ENCODE measurements at regions of chr4 and their contacts with region 1.

Region 1: GRCh38 chr4:3330707-3331106 is 37.9 kb downstream of the RGS12 start:
- DNase-seq: no peak
- H3K4me3 ChIP-seq: no peak overlapping the region
- H3K27ac ChIP-seq: no peak overlapping the region
- H3K4me1 ChIP-seq: no peaks in the 10 kb centered on the region
- CTCF ChIP-seq: no peak

Region 2: DNA sequence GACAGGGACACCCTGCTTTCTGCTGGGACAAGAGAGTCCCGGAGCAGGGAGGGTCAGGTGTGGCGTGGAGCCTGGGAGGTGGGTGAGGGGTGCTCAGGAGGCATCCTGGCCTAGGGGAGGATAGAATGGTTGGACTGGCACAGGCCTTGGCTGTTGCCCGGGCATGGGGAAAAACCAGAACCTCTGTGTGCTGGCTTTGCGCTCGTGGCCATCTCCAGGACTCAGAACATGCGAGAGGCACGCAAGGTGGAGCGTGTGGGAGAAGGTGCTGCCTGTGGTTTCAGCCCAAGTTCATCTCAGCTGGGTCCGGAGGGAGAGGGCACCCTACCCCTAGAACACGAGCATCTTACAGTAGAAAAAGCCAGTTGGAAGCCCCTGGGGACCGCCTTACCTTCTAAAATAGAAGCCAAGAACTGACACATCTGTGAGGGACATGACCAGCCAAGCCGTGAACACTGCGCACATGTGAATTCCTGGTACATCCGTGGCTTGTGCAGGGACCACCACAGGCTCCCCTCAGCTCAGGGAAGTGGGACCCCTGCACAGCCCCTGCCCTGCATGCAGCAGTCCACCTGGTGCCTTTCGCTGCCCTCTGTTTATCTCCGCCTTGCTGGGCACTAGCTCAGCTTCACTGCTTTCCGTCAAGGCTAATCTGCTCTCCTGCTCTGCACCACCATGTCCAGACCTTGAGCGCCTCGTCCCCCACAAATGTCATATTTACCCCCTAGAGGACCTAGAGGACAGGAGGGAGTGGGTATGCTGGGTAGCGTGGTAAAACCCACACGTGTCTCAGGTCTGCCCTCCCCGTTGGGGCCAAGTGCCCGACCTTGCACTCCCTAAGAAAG is 68.3 kb before region 1 on chr4:
- CTCF ChIA-PET with region 1: no interaction called
- POLR2A ChIA-PET with region 1: no interaction called
- intact Hi-C with region 1: loop called (anchors 5 kb)
- DNase-seq: no peak
- H3K4me3 ChIP-seq: no peak overlapping the region
- H3K27ac ChIP-seq: no peak overlapping the region
- H3K4me1 ChIP-seq: no peaks in the 10 kb centered on the region
- CTCF ChIP-seq: no peak